Activated naive CD4-positive, alpha-beta T cell treated with anti-CD3 and anti-CD28 coated beads, Interleukin-2, amount 10 ng/mL, durations not matched to agents 7 days and 5 days (primary cell): ENCODE measurements at regions of chr10 and their contacts with region 1.

Region 1: DNA sequence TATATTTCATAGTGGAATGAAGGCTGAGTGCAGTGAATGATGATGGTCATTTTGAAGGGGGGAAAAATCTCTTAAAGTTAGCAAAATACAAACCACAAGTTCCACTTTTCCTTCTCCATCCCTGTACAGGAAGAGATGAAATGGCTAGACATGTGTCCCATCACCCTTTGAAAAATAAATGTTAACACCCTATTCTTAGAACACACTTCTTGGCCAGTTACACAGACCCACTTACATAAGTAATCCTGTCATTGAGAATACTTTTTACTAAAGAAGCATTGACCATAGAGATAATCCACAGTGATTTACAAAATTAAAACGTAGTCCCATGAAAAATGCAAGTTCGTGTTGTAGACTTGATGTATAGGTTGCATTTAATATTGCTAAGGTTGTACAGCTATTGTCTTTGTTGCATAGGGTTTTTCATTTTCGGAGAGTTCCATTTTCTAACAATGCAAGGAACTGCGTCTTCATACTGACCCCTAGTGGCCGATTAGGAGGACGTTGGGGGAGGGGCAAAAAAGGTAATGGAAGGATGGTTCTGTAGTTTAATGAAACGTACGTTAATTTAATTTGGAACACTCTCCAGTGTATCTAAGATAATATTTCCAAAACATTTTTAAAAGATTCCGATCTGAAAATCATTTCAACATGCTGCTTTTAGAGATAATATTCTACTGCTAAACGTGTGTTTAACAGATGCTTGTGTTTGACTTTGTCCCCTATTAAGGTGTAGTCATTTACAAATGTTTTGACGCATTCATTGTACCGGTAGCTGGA is 60.9 kb downstream of the ARMC3 start:
- DNase-seq: peak; percentile 75
- H3K4me3 Mint-ChIP-seq: no peak overlapping the region
- H3K27ac Mint-ChIP-seq: no peak overlapping the region
- H3K4me1 Mint-ChIP-seq: peaks cover 19% of the 10 kb centered on the region
- H3K27me3 Mint-ChIP-seq: peaks cover 17% of the 10 kb centered on the region

Region 2: DNA sequence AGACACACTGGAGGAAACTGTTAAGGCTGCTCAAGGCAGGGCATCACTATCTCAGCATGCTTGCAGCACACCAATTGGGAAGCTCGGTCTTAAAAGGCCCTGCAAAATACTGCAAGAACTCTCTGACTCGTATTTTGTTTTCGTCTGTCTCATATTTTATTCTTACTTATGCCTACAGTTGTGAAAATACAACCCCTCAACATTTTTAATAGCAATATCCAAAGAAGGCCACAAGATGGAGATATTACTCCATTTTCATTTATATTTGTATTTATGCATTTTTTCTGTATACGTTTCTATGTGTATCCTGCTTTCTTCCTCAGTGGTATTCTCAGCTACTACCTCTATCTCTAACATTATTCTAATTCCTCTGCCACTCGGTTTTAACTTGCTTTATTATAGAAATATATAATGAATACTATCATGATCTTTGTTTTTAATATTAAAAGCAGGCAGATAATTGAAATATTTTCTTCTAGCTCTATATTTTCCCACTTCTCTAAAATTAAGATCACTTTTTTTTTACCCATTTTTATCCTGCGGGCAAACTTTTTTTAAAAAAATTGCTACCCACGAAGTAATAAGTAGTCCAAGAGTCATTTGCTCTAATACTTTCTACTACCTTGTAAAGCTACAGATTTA is 995.3 kb before region 1 on chr10:
- CTCF ChIA-PET with region 1: interaction called, 49 read pairs
- DNase-seq: no peak
- H3K4me3 Mint-ChIP-seq: no peak overlapping the region
- H3K27ac Mint-ChIP-seq: no peak overlapping the region
- H3K4me1 Mint-ChIP-seq: peaks cover 7% of the 10 kb centered on the region
- H3K27me3 Mint-ChIP-seq: no peaks in the 10 kb centered on the region

Region 3: DNA sequence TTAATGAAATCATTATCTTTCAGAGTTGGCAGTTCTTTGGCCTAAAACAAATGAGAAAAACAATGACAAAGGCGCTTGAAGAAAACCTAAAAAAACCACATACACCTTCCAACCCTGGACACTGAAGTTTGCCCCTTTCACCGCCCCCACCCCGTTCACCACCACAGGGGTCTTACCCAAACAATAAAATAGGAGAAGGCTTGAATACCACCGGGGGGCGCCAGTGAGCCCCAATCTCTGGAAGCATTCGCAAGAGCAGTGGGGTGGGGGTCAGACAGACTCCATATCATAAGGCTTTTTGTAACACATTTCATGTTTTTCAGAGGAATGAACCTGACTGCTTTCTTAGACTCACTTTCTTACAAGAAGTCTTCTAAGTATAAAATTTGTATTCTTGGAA is 438.0 kb before region 1 on chr10:
- CTCF ChIA-PET with region 1: interaction called, 14 read pairs
- DNase-seq: peak; percentile 72
- H3K4me3 Mint-ChIP-seq: no peak overlapping the region
- H3K27ac Mint-ChIP-seq: no peak overlapping the region
- H3K4me1 Mint-ChIP-seq: peaks cover 2% of the 10 kb centered on the region
- H3K27me3 Mint-ChIP-seq: no peaks in the 10 kb centered on the region

Region 4: GRCh38 chr10:22573820-22574569 is 414.8 kb before region 1 on chr10:
- CTCF ChIA-PET with region 1: interaction called, 24 read pairs
- DNase-seq: peak; percentile 49
- H3K4me3 Mint-ChIP-seq: no peak overlapping the region
- H3K27ac Mint-ChIP-seq: peak overlapping the region; percentile 72
- H3K4me1 Mint-ChIP-seq: peaks cover 37% of the 10 kb centered on the region
- H3K27me3 Mint-ChIP-seq: no peaks in the 10 kb centered on the region

Region 5: DNA sequence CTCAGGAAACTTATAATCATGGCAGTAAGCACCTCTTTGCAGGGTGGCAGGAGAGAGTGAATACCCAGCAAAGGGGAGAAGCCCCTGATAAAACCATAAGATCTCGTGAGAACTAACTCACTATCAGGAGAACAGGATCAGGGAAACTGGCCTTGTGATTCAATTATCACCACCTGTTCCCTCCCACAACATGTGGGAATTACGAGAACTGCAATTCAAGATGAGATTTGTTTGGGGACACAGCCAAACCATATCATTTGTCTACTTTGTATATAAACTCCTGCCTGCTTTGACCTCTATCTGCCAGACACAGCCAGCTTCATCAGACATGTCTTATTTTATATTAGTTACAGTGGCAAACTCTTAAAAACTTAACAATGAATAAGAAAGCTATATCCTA is 10.5 kb before region 1 on chr10:
- CTCF ChIA-PET with region 1: no interaction called
- DNase-seq: no peak
- H3K4me3 Mint-ChIP-seq: no peak overlapping the region
- H3K27ac Mint-ChIP-seq: no peak overlapping the region
- H3K4me1 Mint-ChIP-seq: no peaks in the 10 kb centered on the region
- H3K27me3 Mint-ChIP-seq: peaks cover 3% of the 10 kb centered on the region

Region 6: DNA sequence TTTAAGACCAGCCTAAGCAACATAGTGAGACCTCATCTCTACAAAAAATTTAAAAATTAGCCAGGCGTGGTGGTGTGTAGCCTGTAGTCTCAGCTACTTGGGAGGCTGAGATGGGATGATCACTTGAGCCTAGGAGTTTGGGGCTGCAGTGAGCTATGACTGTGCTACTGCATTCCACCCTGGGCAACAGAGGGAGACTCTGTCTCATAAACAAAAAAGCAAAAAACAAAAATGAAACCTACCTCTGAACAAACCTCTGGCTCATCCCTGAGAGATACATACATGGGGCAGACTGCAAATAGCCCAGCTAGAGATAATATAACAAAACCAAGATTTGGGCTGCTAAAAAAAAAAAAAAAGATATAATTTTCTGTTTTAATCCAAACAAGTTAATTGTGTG is 336.4 kb after region 1 on chr10:
- CTCF ChIA-PET with region 1: no interaction called
- DNase-seq: peak; percentile 38
- H3K4me3 Mint-ChIP-seq: no peak overlapping the region
- H3K27ac Mint-ChIP-seq: no peak overlapping the region
- H3K4me1 Mint-ChIP-seq: peaks cover 2% of the 10 kb centered on the region
- H3K27me3 Mint-ChIP-seq: peaks cover 8% of the 10 kb centered on the region